Activated naive CD4-positive, alpha-beta T cell treated with anti-CD3 and anti-CD28 coated beads, Interleukin-2, amount 10 ng/mL, durations not matched to agents 7 days and 5 days (primary cell): ENCODE measurements at regions of chr1 and their contacts with region 1.

Region 1: GRCh38 chr1:205591522-205592351 is 40.1 kb downstream of the ELK4 start:
- DNase-seq: peak; percentile 93
- H3K4me3 Mint-ChIP-seq: peak overlapping the region; percentile 84
- H3K27ac Mint-ChIP-seq: peak overlapping the region; percentile 89
- H3K4me1 Mint-ChIP-seq: peaks cover 56% of the 10 kb centered on the region
- H3K27me3 Mint-ChIP-seq: peaks cover 9% of the 10 kb centered on the region

Region 2: GRCh38 chr1:205528887-205529825 is 62.6 kb before region 1 on chr1:
- CTCF ChIA-PET with region 1: interaction called, 21 read pairs
- DNase-seq: peak; percentile 86
- H3K4me3 Mint-ChIP-seq: no peak overlapping the region
- H3K27ac Mint-ChIP-seq: no peak overlapping the region
- H3K4me1 Mint-ChIP-seq: peaks cover 3% of the 10 kb centered on the region
- H3K27me3 Mint-ChIP-seq: peaks cover 21% of the 10 kb centered on the region

Region 3: DNA sequence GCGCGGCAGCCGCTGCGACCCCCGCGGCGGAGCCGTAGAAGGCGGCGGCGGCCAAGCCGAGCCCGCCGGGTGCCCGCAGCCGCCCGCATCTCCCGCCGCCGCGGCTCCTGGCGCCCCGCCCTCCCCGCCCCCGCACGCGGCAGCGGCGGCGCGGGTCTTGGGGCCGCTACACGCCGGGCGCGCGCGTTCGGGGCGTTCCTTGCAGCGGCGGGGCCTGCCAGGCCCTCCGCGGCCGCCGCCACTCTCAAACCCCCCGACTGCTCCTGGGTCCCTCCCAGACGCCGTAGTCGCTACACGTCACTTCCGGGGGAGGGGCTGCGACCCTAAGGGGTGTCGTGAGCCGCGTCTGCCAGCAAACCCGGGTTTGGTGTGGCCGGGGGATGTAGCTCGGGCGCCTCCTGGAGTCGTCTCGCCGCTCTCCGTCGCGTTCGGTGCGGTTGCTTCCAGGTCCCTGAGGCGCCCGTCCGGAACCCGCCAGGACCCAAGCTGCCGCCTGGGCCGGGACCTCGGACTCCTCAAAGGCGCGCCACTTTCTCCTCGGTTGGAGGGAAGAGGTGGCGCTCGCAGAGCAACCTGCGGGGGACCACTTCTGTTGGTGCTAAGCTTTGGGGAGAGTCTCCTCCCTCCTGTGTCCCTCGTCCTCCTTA is 40.1 kb after region 1 on chr1 and contains the start of gene ELK4:
- CTCF ChIA-PET with region 1: interaction called, 234 read pairs
- DNase-seq: peak; percentile 100
- H3K4me3 Mint-ChIP-seq: peak within 1 kb of the TSS; percentile 87
- H3K27ac Mint-ChIP-seq: peak within 1 kb of the TSS; percentile 97
- H3K4me1 Mint-ChIP-seq: peaks cover 52% of the 10 kb centered on the region
- H3K27me3 Mint-ChIP-seq: peaks cover 4% of the 10 kb centered on the region

Region 4: GRCh38 chr1:205645519-205645918 is 53.8 kb after region 1 on chr1:
- CTCF ChIA-PET with region 1: interaction called, 11 read pairs
- DNase-seq: no peak
- H3K4me3 Mint-ChIP-seq: no peak overlapping the region
- H3K27ac Mint-ChIP-seq: no peak overlapping the region
- H3K4me1 Mint-ChIP-seq: no peaks in the 10 kb centered on the region
- H3K27me3 Mint-ChIP-seq: peaks cover 18% of the 10 kb centered on the region